ENCODE measurements at regions of chr3 and their contacts with region 1.

Region 1: GRCh38 chr3:18007980-18008379 is 265.5 kb upstream of the TBC1D5 start:
- DNase-seq: no peak
- CTCF ChIP-seq: no peak

Region 2: GRCh38 chr3:17995769-17996168 is 12.2 kb before region 1 on chr3:
- CTCF ChIA-PET with region 1: interaction called, 11 read pairs
- POLR2A ChIA-PET with region 1: no interaction called
- DNase-seq: no peak
- CTCF ChIP-seq: no peak

Region 3: GRCh38 chr3:18033581-18034108 is 25.7 kb after region 1 on chr3:
- CTCF ChIA-PET with region 1: interaction called, 11 read pairs
- POLR2A ChIA-PET with region 1: no interaction called
- DNase-seq: no peak
- CTCF ChIP-seq: no peak

Measured in GM10248 (cell line).